Ovary (tissue), 10 donors: ENCODE measurements at regions of chr6 and their contacts with region 1.

Region 1: DNA sequence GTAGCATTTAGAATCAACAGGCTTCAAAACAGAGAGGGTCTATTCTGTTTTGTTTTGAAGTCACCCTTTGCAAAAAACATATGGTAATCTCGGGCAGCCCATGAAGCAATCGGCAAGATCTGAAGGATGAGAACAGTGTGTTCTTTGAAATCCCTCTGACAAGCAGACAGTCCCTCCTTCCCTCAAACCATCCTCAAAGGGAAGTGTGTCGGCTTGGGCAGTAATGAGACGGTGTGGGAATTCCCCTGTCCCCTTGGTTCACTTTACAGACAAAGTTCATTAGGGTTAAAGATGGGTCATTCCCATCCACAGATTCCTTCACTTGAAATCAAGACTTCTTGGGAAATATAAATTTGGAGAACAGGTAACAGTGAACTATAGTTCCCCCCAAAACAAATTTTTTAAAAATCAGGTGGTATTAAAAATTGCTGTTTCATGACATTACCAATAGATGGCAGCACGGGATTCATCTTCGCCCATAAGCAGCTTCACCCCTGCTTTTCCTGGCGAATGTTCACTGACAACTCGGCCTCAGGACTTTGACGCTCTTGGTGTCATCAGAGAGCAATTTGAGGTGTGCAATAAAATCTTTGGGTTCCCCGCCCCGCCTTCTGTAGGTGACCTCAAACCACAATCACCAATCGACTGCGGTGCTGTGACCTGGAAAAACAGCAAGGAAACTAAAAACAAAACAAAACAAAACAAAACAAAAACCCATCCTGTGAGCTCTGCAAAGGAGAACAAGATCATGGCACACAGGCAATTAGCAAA is 159.3 kb upstream of the TNFAIP3 start:
- DNase-seq: peak; percentile 53 to 71 (median 60)
- H3K4me3 ChIP-seq: no peak overlapping the region
- H3K27ac ChIP-seq: no peak overlapping the region
- H3K4me1 ChIP-seq: peaks cover 14% of the 10 kb centered on the region
- H3K27me3 ChIP-seq: no peaks in the 10 kb centered on the region
- CTCF ChIP-seq: peak; percentile 67 to 78 (median 77)
- EP300 ChIP-seq: no peak
- POLR2A ChIP-seq: no peak

Region 2: DNA sequence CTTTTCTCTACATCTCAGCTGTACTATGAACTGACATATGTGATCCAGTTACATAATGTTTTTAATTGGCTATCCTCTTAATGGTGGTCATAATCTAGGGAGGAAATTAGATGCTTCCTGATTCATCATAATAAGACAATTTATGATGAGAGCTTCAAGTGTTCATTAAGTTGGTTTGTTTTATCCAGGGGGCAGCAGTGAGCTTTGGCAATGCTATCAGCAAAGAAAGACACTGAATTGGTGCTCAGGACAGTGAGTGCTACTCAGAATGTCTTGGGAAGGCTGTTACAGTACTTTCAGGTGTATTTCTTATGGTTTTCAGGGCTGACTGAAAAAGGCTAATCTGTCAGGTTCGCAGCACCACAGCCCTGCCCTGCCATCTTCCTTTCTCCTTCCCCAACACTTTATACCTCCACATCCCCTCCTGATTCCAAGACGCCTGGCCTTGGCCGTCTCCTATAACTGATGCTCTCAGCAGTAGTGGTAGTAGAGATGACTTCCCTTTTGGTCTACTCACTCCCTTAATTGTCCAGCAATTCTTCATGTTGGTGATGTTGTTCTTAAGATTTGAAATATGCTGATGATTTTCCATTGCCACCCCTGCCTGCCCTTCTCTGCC is 92.3 kb after region 1 on chr6:
- intact Hi-C with region 1: loop called in 1 of 4 experiments (anchors 5 kb)
- DNase-seq: peak in 3 of 5 donors; percentile 32 to 76 (median 37)
- H3K4me3 ChIP-seq: no peak overlapping the region
- H3K27ac ChIP-seq: no peak overlapping the region
- H3K4me1 ChIP-seq: peaks cover 4% of the 10 kb centered on the region
- H3K27me3 ChIP-seq: no peaks in the 10 kb centered on the region
- CTCF ChIP-seq: peak in 2 of 3 donors; percentile 29 to 74
- EP300 ChIP-seq: no peak
- POLR2A ChIP-seq: no peak

Region 3: GRCh38 chr6:137866914-137867684 is 159.3 kb after region 1 on chr6 and contains the start of gene TNFAIP3:
- intact Hi-C with region 1: loop called (anchors 2 to 5 kb)
- DNase-seq: peak; percentile 90 to 96 (median 93)
- H3K4me3 ChIP-seq: peak within 1 kb of the TSS; percentile 93
- H3K27ac ChIP-seq: peak within 1 kb of the TSS; percentile 85 to 88
- H3K4me1 ChIP-seq: peaks cover 8% of the 10 kb centered on the region
- H3K27me3 ChIP-seq: no peaks in the 10 kb centered on the region
- CTCF ChIP-seq: peak; percentile 79 to 92 (median 84)
- EP300 ChIP-seq: peak; percentile 80
- POLR2A ChIP-seq: peak; percentile 85
- total RNA-seq, gene TNFAIP3: 57.3 to 206 (median 99.5) TPM

Region 4: DNA sequence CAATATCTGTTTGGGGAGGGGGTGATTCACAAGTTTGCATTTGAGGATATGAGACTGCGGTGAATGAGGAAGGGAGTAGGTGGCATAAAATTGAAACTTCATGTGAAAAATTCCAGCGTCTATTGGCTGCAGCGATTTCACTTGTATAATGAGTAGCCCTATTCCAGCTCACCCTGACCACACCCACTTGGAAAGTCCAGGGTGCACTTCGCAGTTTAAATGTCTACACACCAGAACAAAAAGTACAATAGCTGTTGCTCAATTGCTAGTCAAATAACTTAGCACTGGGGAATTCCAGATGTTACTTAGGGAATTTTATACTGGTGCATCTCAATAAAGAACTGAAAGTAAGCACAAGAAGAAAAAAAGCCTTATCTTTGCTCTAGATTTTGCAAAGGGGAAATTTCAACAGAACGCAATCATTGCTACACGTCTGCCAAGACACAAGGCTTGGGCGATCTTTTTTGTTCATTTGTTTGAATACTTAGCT is 165.5 kb after region 1 on chr6:
- intact Hi-C with region 1: loop called in 3 of 4 experiments (anchors 5 kb)
- DNase-seq: peak in 4 of 5 donors; percentile 52 to 81 (median 64)
- H3K4me3 ChIP-seq: peak overlapping the region; percentile 7
- H3K27ac ChIP-seq: no peak overlapping the region
- H3K4me1 ChIP-seq: peaks cover 10% of the 10 kb centered on the region
- H3K27me3 ChIP-seq: no peaks in the 10 kb centered on the region
- CTCF ChIP-seq: no peak
- EP300 ChIP-seq: no peak
- POLR2A ChIP-seq: no peak

Region 5: DNA sequence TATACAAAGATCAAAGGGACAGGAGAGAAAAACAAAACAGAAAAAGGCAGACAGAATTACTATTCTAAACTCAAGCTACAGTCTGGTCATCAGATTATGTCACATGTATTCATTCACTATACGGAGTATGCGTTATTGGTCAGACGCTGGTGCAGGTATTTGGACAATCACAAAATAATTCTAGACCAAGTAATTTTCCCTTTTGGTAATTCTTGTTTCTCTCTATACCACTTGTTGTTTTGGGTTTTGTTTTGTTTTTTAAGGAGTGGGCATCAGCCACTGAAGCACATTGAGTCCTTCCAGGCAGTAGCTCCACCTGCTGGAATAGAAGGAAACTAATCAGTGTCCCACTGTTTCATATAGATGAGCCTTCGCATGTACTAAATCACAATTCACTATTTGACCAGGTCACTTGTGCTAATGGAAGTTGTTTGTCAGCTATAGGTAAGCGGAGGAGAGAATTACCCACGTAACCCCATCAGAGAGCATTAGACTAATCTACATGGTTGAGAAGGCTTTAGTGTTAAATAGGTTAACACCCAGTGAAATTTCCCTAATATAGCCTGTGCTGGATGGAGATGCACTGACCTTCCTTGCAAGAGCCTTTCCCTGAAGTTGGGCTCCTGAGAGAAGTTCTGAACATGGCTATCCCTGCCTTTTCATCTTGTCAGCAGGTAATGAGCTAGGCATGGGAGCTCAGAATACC is 237.2 kb after region 1 on chr6:
- intact Hi-C with region 1: loop called (anchors 2 to 10 kb)
- DNase-seq: peak in 2 of 5 donors; percentile 14 to 31
- H3K4me3 ChIP-seq: no peak overlapping the region
- H3K27ac ChIP-seq: no peak overlapping the region
- H3K4me1 ChIP-seq: no peaks in the 10 kb centered on the region
- H3K27me3 ChIP-seq: no peaks in the 10 kb centered on the region
- CTCF ChIP-seq: peak; percentile 52 to 86 (median 77)
- EP300 ChIP-seq: no peak
- POLR2A ChIP-seq: no peak

Region 6: DNA sequence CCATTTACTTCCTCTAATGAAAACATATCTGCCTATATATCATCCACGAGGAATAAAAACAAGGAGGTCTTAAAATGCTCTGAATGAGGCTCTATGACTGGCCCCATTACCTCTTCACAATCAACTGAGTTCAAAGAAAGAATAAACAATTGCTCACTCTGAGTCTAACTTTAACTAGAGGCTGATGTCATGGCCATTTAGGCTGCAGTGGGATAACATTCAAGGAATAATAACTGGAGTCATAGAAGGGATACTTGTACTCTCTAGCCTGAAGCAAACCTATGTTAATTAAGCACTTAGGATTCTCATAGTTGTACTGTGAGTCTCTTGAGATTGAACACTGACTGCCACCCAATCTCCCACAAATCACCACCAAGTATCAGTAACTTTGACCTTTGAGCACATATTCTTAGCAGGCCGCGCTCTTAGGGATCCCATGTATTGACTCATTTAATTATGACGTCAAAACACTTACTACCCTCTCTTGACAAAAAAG is 329.3 kb after region 1 on chr6:
- intact Hi-C with region 1: no loop called
- DNase-seq: no peak
- H3K4me3 ChIP-seq: no peak overlapping the region
- H3K27ac ChIP-seq: no peak overlapping the region
- H3K4me1 ChIP-seq: no peaks in the 10 kb centered on the region
- H3K27me3 ChIP-seq: no peaks in the 10 kb centered on the region
- CTCF ChIP-seq: no peak
- EP300 ChIP-seq: no peak
- POLR2A ChIP-seq: no peak